AG04450 (cell line): ENCODE measurements at regions of chr1 and their contacts with region 1.

Region 1: GRCh38 chr1:112501810-112502641 is 6.7 kb upstream of the WNT2B start:
- DNase-seq: no peak
- H3K4me3 ChIP-seq: peak overlapping the region; percentile 55
- H3K27ac ChIP-seq: no peak overlapping the region
- H3K27me3 ChIP-seq: peaks cover 14% of the 10 kb centered on the region
- CTCF ChIP-seq: peak; percentile 88

Region 2: DNA sequence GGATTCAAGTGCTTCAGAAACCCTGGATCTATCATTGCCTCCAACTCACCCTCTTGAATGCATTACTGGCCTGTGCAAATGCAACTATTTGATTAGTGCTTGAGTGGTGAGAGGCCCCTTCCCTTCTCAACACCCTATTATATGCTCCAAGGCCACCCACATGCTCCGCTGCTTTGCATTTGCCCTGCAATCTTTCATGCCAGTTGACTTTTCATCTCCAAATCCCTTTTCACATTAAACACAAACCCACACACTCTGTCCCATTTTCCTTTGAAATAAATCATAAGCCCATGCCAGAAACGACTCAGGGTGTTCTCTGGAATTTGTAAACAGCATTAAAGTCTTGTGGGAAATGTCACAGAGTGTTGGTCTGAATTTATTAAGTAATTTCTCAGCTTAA is 184.9 kb before region 1 on chr1:
- CTCF ChIA-PET with region 1: no interaction called
- POLR2A ChIA-PET with region 1: no interaction called
- DNase-seq: no peak
- H3K4me3 ChIP-seq: no peak overlapping the region
- H3K27ac ChIP-seq: no peak overlapping the region
- H3K27me3 ChIP-seq: peaks cover 15% of the 10 kb centered on the region
- CTCF ChIP-seq: no peak

Region 3: GRCh38 chr1:112395821-112396652 is 106.0 kb before region 1 on chr1 and contains the start of gene CTTNBP2NL:
- CTCF ChIA-PET with region 1: interaction called, 42 read pairs
- POLR2A ChIA-PET with region 1: interaction called, 3 read pairs
- DNase-seq: peak; percentile 85
- H3K4me3 ChIP-seq: peak within 1 kb of the TSS; percentile 97
- H3K27ac ChIP-seq: peak within 1 kb of the TSS; percentile 94
- H3K27me3 ChIP-seq: no peaks in the 10 kb centered on the region
- CTCF ChIP-seq: no peak
- polyA plus RNA-seq, gene CTTNBP2NL: 23.6 and 30.5 TPM in 2 replicates

Region 4: DNA sequence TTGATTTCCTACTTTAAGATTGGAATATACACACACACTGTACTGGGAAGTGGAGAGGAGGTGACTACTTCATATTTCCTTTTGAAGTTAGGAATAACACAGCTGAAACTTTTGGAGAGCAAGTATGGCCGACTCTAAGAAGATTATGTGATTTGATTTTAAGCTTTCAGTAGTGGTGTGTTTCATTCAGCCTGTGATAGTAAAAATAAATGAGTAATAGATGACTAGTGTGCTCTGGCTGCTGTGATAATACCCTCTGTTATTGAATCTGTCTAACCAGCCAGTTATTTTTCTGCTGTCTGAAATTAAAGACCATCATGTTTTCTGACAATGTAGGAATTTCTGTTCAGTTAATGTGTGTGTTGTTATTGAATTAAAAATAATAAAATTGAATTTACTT is 57.8 kb before region 1 on chr1:
- CTCF ChIA-PET with region 1: no interaction called
- POLR2A ChIA-PET with region 1: no interaction called
- DNase-seq: no peak
- H3K4me3 ChIP-seq: no peak overlapping the region
- H3K27ac ChIP-seq: no peak overlapping the region
- H3K27me3 ChIP-seq: no peaks in the 10 kb centered on the region
- CTCF ChIP-seq: no peak

Region 5: DNA sequence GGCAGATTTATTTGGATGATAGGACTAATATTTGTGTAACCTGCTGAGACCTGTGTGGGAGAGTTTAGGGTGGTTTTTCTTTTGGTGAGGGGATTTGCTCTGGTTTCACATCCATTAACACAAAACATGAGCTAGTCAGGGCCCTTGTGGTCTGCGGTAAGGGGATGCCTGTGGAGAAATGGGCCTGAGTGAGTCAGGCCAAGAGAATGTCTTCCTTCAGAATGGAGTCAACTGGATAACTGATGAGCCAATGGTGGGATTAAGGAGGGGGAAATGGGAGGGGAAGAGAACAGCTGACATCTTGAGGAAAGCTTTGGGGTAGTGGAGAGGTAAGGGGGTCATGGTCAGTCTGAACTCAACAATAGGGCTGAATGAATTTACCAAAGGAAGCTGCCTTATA is 20.6 kb after region 1 on chr1:
- CTCF ChIA-PET with region 1: interaction called, 19 read pairs
- POLR2A ChIA-PET with region 1: interaction called, 6 read pairs
- DNase-seq: peak; percentile 86
- H3K4me3 ChIP-seq: no peak overlapping the region
- H3K27ac ChIP-seq: peak overlapping the region; percentile 61
- H3K27me3 ChIP-seq: peaks cover 30% of the 10 kb centered on the region
- CTCF ChIP-seq: no peak

Region 6: DNA sequence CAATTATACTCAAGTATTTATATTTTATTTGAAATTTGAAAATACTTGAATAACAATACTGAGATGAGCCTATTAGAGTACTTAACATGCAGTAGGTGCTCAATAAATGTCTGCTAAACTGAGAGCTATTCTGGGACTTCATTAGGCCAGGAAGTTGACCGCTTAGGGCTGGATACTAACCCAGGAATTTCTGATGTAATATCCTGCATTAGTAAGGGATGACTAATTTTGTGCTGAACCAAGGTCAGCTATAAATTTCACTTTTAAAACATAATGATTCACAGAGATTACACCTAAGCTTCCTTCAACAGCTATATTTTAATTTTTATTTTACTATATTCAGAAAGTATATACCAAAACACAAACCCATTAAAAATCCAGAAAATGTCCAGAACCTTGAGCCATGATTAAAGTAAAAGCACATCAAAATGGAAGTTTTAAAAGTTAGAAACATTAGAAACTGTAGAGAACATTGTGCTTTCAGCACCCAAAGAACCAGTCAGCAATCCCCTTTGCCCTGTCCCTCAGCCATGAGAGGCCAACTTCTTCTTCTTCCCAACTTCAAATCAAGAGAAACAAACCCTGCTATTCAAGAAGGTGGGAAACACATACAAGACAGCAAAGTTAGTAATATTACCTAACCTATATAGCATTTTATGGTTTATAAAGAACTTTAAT is 42.1 kb after region 1 on chr1:
- CTCF ChIA-PET with region 1: interaction called, 19 read pairs
- POLR2A ChIA-PET with region 1: interaction called, 12 read pairs
- DNase-seq: peak; percentile 63
- H3K4me3 ChIP-seq: no peak overlapping the region
- H3K27ac ChIP-seq: peak overlapping the region; percentile 83
- H3K27me3 ChIP-seq: no peaks in the 10 kb centered on the region
- CTCF ChIP-seq: no peak

Region 7: GRCh38 chr1:112605633-112606327 is 103.8 kb after region 1 on chr1:
- CTCF ChIA-PET with region 1: interaction called, 177 read pairs
- POLR2A ChIA-PET with region 1: no interaction called
- DNase-seq: no peak
- H3K4me3 ChIP-seq: no peak overlapping the region
- H3K27ac ChIP-seq: no peak overlapping the region
- H3K27me3 ChIP-seq: no peaks in the 10 kb centered on the region
- CTCF ChIP-seq: no peak

Region 8: GRCh38 chr1:112625696-112626095 is 123.7 kb after region 1 on chr1:
- CTCF ChIA-PET with region 1: no interaction called
- POLR2A ChIA-PET with region 1: no interaction called
- DNase-seq: no peak
- H3K4me3 ChIP-seq: no peak overlapping the region
- H3K27ac ChIP-seq: no peak overlapping the region
- H3K27me3 ChIP-seq: no peaks in the 10 kb centered on the region
- CTCF ChIP-seq: no peak

Region 9: DNA sequence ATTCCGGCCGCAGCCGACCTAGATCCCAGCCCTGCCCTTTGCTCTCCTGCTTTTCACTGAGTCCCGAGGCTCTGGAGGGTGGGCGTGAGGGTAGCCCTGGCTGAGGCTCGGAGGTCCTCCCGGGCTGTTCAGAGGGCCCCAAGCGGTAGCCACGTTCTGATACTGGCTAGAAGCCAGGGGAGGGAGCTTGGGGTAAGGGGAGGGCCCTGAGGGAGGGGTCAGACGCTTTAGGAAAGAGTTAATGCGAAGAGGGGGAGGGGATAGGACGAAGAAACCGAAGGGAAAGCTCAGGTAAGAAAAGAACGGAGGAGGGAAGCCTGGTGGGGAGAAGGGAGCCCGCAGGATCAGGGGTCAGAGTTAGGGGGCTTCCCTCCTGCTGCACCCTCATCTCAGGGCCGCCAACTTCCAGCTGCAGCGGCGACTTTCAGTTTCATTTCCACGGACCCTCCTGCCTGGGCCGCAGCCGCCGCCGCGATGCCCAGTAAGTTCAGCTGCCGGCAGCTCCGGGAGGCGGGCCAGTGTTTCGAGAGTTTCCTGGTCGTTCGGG is 172.5 kb after region 1 on chr1 and contains the start of gene MOV10:
- CTCF ChIA-PET with region 1: interaction called, 12 read pairs
- POLR2A ChIA-PET with region 1: no interaction called
- DNase-seq: peak; percentile 36
- H3K4me3 ChIP-seq: peak within 1 kb of the TSS; percentile 80
- H3K27ac ChIP-seq: peak within 1 kb of the TSS; percentile 86
- H3K27me3 ChIP-seq: no peaks in the 10 kb centered on the region
- CTCF ChIP-seq: no peak
- polyA plus RNA-seq, gene MOV10: 58.1 and 59.2 TPM in 2 replicates

Region 10: DNA sequence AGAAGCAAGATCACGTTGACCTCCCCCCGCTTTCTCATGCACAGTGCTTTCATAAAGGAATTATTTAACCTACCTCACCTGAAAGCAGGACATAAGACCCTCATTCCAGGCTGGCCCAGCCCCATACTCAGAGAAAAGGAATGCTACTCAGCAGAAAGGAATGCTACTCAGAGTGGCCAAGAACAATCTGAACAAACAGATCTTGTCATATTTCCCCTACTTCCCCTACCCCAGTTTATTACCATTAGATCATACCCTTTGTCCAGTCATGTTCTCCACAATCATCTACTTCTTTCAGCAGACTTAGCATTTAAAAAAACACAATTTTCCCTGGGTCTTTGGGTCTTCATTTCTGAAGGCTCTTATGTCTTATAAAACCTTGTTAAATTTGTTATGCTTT is 364.1 kb after region 1 on chr1:
- CTCF ChIA-PET with region 1: no interaction called
- POLR2A ChIA-PET with region 1: no interaction called
- DNase-seq: peak; percentile 32
- H3K4me3 ChIP-seq: no peak overlapping the region
- H3K27ac ChIP-seq: no peak overlapping the region
- H3K27me3 ChIP-seq: no peaks in the 10 kb centered on the region
- CTCF ChIP-seq: no peak